CD4-positive, alpha-beta T cell (primary cell): ENCODE measurements at regions of chr5 and their contacts with region 1.

Region 1: GRCh38 chr5:8462565-8462964 is 593.6 kb downstream of the MTRR start:
- DNase-seq: no peak
- ATAC-seq: no peak
- H3K4me3 ChIP-seq: no peak overlapping the region
- H3K4me3 Mint-ChIP-seq: no peak overlapping the region
- H3K27ac ChIP-seq: no peak overlapping the region
- H3K27ac Mint-ChIP-seq: no peak overlapping the region
- H3K4me1 ChIP-seq: peaks cover 2% of the 10 kb centered on the region
- H3K4me1 Mint-ChIP-seq: peaks cover 17% of the 10 kb centered on the region
- H3K27me3 ChIP-seq: no peaks in the 10 kb centered on the region
- H3K27me3 Mint-ChIP-seq: no peaks in the 10 kb centered on the region
- CTCF ChIP-seq: no peak

Region 2: GRCh38 chr5:10343486-10343885 is 1880.9 kb after region 1 on chr5:
- CTCF ChIA-PET with region 1: no interaction called
- POLR2A ChIA-PET with region 1: no interaction called
- intact Hi-C with region 1: loop called in 1 of 2 experiments (anchors 10 kb)
- DNase-seq: no peak
- ATAC-seq: no peak
- H3K4me3 ChIP-seq: no peak overlapping the region
- H3K4me3 Mint-ChIP-seq: no peak overlapping the region
- H3K27ac ChIP-seq: no peak overlapping the region
- H3K27ac Mint-ChIP-seq: no peak overlapping the region
- H3K4me1 ChIP-seq: no peaks in the 10 kb centered on the region
- H3K4me1 Mint-ChIP-seq: no peaks in the 10 kb centered on the region
- H3K27me3 ChIP-seq: no peaks in the 10 kb centered on the region
- H3K27me3 Mint-ChIP-seq: no peaks in the 10 kb centered on the region
- CTCF ChIP-seq: no peak